ENCODE measurements at regions of chr19 and their contacts with region 1.

Region 1: GRCh38 chr19:49391581-49392399 is 3.7 kb downstream of the KASH5 start:
- DNase-seq: peak; percentile 86
- ATAC-seq: peak; percentile 96
- H3K4me3 Mint-ChIP-seq: no peak overlapping the region
- H3K27ac Mint-ChIP-seq: peak overlapping the region; percentile 22
- H3K4me1 Mint-ChIP-seq: peaks cover 24% of the 10 kb centered on the region
- H3K27me3 Mint-ChIP-seq: peaks cover 4% of the 10 kb centered on the region

Region 2: DNA sequence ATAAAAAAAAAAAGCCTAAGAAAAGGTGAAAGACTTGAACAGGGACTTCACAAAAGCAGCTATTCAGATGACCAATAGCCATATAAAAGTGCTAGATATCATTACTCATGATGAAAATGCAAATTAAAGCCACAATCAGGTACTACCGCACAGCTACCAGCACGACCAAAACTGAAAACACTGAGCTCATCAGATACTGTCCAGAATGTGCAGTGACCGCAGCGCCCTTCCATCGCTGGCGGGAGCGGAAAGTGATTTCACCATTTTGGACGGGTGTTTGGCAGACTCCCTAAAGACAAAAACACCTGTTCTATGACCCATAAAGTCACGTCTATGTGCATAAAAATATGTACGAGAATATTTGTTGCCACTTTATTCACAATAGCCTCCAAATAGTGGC is 127.5 kb before region 1 on chr19:
- CTCF ChIA-PET with region 1: no interaction called
- POLR2A ChIA-PET with region 1: no interaction called
- DNase-seq: no peak
- ATAC-seq: no peak
- H3K4me3 Mint-ChIP-seq: no peak overlapping the region
- H3K27ac Mint-ChIP-seq: no peak overlapping the region
- H3K4me1 Mint-ChIP-seq: peaks cover 8% of the 10 kb centered on the region
- H3K27me3 Mint-ChIP-seq: peaks cover 30% of the 10 kb centered on the region

Region 3: DNA sequence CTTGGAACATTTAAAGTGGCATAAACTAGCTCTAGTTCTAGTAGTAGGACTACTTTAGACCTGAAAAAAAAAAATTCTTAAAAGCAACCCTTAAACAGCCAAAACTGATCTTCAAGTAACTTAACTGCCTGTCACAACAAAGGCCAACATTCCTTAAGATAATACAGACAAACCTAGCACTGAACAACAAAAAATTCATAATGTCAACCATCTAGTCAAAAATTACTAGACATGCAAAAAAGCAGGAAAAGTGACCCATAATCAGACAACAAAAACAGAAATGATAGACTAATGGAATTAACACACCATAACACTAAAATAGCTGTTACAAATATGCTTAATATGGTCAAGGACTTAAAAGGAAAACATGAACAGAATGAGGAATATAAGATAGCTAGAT is 73.5 kb before region 1 on chr19:
- CTCF ChIA-PET with region 1: no interaction called
- POLR2A ChIA-PET with region 1: no interaction called
- DNase-seq: no peak
- ATAC-seq: no peak
- H3K4me3 Mint-ChIP-seq: no peak overlapping the region
- H3K27ac Mint-ChIP-seq: no peak overlapping the region
- H3K4me1 Mint-ChIP-seq: peaks cover 6% of the 10 kb centered on the region
- H3K27me3 Mint-ChIP-seq: no peaks in the 10 kb centered on the region

Region 4: DNA sequence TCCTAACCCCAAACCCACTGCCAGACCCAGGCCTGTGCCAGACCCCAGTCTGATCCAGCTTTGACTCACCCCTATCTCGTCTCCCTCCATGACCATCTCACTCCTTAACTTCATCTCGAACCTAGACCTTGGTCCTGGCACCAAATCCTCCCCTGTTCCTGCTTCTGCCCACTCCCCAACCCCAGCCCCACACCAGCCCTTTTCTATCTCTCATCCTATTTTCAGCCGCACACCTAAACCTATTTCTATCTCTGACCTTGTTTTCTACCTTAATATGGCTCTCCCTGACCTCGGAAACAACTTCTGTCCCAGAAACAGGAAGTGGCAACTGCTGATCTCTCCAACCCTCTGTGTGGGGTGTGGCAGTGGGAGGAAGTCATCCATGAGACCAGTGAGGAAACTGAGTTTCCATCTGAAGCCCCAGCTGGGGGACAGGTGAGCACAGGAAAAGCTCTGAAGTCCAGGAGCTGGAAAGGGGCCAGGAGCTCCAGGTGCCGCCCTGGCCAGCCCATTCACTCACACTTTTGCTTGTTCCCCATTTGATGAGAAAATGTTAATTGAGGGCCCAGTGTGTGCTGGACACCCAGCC is 17.7 kb after region 1 on chr19:
- CTCF ChIA-PET with region 1: interaction called, 52 read pairs
- POLR2A ChIA-PET with region 1: interaction called, 5 read pairs
- DNase-seq: peak; percentile 61
- ATAC-seq: peak; percentile 74
- H3K4me3 Mint-ChIP-seq: peak overlapping the region; percentile 30
- H3K27ac Mint-ChIP-seq: peak overlapping the region; percentile 84
- H3K4me1 Mint-ChIP-seq: peaks cover 58% of the 10 kb centered on the region
- H3K27me3 Mint-ChIP-seq: peaks cover 3% of the 10 kb centered on the region

Region 5: GRCh38 chr19:49430678-49431329 is 39.0 kb after region 1 on chr19:
- CTCF ChIA-PET with region 1: interaction called, 20 read pairs
- POLR2A ChIA-PET with region 1: no interaction called
- DNase-seq: peak; percentile 50
- ATAC-seq: no peak
- H3K4me3 Mint-ChIP-seq: no peak overlapping the region
- H3K27ac Mint-ChIP-seq: peak overlapping the region; percentile 43
- H3K4me1 Mint-ChIP-seq: peaks cover 48% of the 10 kb centered on the region
- H3K27me3 Mint-ChIP-seq: peaks cover 77% of the 10 kb centered on the region

Region 6: DNA sequence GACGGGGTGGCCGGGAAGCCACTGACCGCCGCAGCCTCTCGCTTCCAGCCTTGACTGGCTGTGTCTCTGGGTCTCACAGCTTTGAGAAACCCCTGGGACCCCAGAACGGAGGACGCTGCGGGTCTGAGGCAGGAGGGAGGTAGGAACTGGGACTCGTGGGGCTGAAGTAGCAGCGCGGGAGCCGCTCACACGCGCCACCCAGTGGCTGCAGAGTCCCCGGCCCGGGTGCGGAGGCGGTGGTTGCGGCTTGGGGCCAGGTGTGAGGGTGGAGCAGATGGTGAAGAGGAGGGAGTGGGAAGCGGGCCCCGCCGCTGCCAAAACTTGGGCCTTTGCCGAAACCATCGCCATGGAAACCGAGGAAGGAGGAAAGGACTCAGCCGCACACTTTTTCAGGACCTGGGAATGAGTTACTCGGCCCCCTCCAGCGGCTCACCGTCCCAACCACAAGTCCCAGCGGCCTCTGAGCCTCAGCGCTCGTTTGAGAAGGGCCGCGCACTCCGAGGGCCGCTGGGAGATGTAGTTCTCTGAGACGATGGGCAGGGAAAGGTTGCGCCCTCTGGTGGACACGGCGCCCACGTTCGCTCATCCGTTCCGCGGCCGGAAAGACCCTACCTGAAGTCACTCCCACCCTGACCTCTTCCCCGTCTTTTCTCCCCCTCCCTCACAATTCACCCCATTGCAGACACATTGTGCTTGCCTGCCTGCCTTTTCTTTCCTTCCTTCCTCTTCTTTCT is 51.7 kb after region 1 on chr19:
- CTCF ChIA-PET with region 1: interaction called, 40 read pairs
- POLR2A ChIA-PET with region 1: no interaction called
- DNase-seq: peak; percentile 96
- ATAC-seq: peak; percentile 88
- H3K4me3 Mint-ChIP-seq: peak overlapping the region; percentile 78
- H3K27ac Mint-ChIP-seq: peak overlapping the region; percentile 84
- H3K4me1 Mint-ChIP-seq: peaks cover 60% of the 10 kb centered on the region
- H3K27me3 Mint-ChIP-seq: peaks cover 38% of the 10 kb centered on the region

Region 7: DNA sequence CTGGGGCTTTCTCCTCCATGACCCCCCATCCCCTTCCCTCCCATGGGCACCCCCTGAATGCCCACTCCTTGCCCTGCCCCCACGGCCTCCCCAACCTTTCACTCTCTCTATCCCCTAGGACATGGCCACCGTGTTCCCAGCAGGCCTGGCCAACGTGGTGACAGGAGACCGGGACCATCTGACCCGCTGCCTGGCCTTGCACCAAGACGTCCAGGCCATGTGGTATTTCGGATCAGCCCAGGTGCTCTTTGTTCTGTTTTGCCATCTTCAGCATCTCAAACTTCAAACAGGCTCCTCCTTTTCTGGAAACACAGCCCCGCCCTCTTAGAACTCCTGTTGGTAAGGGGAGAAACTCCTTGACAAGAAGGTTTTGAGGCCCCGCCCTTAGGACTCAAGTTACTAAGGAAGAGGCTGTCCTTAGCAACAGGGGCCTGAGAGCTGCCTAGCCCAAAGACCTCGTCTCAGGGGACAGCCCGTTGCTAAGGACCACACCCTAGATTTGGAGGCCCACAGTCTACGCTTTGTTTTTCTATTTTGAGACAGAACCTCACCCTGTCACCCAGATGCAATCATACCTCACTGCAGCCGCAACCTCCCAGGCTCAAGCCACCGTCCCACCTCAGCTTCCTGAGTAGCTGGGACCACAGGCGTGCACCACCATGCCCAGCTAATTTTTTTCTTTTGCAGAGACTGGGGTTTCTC is 77.1 kb after region 1 on chr19:
- CTCF ChIA-PET with region 1: interaction called, 51 read pairs
- POLR2A ChIA-PET with region 1: no interaction called
- DNase-seq: peak; percentile 96
- ATAC-seq: peak; percentile 80
- H3K4me3 Mint-ChIP-seq: peak overlapping the region; percentile 70
- H3K27ac Mint-ChIP-seq: peak overlapping the region; percentile 99
- H3K4me1 Mint-ChIP-seq: peaks cover 56% of the 10 kb centered on the region
- H3K27me3 Mint-ChIP-seq: no peaks in the 10 kb centered on the region

Region 8: DNA sequence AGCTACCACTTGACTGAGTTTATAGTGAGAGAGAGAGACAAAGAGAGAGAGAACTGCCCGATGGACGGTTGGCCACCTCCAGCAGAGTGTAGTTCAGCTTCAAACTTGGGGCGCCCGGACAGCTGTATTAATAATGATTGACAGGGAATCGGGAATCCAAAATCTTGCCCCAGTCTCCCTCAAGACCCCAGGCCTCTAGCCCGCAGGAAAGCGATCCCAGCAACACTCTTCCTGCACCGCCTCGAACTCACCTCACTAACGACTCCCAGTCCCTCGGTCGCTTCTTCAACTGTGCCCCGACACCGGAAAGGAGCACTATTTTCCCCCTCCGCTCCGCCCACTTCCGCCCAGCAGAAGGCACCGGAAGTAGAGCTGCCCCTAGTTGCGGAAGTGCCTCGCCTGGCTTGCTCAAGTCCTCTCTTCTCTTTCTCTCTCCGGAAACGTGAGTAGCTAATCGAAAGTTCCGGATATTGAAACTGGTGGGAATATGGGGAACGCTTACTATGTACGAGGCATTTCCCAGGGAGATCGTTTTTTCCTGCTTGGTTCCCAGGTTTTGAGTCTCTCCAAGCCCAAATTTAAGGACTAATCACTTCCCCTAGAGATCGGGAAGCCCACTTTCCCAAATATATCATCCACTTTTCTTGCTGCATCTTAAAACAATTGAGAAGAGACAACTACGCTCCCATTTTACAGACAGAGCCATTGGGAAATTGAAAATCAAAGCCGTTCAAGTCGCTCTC is 188.6 kb after region 1 on chr19 and contains the start of gene NOSIP:
- CTCF ChIA-PET with region 1: no interaction called
- POLR2A ChIA-PET with region 1: no interaction called
- DNase-seq: peak; percentile 98
- ATAC-seq: peak; percentile 97
- H3K4me3 Mint-ChIP-seq: peak within 1 kb of the TSS; percentile 96
- H3K27ac Mint-ChIP-seq: peak within 1 kb of the TSS; percentile 91
- H3K4me1 Mint-ChIP-seq: peaks cover 33% of the 10 kb centered on the region
- H3K27me3 Mint-ChIP-seq: no peaks in the 10 kb centered on the region
- total RNA-seq, gene NOSIP: 147 to 159 TPM